ENCODE measurements at regions of chr2 and their contacts with region 1.

Region 1: GRCh38 chr2:205311201-205311600 is 371.1 kb upstream of the NRP2 start:
- DNase-seq: no peak
- ATAC-seq: no peak
- H3K4me3 Mint-ChIP-seq: no peak overlapping the region
- H3K27ac Mint-ChIP-seq: no peak overlapping the region
- H3K4me1 Mint-ChIP-seq: peaks cover 3% of the 10 kb centered on the region
- H3K27me3 Mint-ChIP-seq: no peaks in the 10 kb centered on the region

Region 2: DNA sequence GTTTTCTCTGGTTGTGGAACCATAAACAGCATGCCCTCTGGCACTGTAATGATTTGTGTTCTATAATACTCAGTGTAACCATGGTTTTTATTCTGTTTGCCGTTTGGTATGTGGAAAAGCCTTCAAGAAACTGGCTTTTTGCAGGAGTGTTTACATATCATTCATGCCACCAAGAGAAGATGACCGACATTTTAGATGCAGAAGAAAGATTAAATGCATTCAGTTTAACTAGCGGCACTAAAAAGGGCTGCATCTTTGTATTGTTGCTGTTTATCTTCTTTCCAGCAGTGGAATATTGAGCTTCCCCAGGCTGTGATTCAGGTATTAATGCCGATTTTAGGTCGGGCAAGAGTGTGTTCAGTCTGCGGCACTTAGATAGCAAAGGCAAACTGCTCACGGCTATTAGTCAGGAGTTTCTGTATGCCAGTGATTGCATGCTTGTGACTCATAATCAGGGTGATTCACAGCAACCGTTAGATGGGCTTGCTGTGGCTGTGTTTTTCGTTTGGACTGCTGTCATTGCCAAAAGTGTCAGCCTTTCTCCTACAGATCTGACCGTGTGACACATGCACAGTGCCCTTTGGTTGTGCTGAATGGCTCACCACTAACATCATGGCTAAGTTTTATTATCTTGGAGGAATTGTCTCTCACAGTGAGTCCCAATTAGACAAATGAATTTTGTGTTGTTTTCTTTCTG is 286.2 kb before region 1 on chr2:
- CTCF ChIA-PET with region 1: no interaction called
- POLR2A ChIA-PET with region 1: no interaction called
- intact Hi-C with region 1: loop called in 1 of 2 experiments (anchors 10 kb)
- DNase-seq: peak; percentile 66
- ATAC-seq: peak; percentile 98
- H3K4me3 Mint-ChIP-seq: no peak overlapping the region
- H3K27ac Mint-ChIP-seq: peak overlapping the region; percentile 52
- H3K4me1 Mint-ChIP-seq: peaks cover 19% of the 10 kb centered on the region
- H3K27me3 Mint-ChIP-seq: no peaks in the 10 kb centered on the region

Region 3: GRCh38 chr2:205086662-205087061 is 224.5 kb before region 1 on chr2:
- CTCF ChIA-PET with region 1: no interaction called
- POLR2A ChIA-PET with region 1: no interaction called
- intact Hi-C with region 1: no loop called
- DNase-seq: no peak
- ATAC-seq: no peak
- H3K4me3 Mint-ChIP-seq: no peak overlapping the region
- H3K27ac Mint-ChIP-seq: no peak overlapping the region
- H3K4me1 Mint-ChIP-seq: peaks cover 8% of the 10 kb centered on the region
- H3K27me3 Mint-ChIP-seq: no peaks in the 10 kb centered on the region

Region 4: DNA sequence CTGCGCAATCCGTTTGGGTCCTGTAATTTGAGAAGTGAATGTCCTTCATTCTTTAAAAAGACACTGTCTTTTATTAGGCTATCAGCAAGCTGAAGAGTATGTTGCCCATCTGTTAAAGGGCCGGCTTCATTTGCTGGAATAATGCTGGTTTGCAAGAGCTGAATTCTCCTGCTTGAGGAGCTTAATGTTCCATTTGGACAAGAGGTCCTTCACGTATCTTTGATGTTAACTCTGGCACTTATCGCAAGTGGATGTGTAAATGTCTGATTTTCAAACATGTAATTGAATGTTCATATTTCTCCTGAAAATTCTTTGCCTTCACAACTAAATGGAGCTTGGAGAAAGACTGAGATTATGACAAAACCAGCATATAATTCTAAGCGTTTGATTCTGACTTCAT is 90.3 kb after region 1 on chr2:
- CTCF ChIA-PET with region 1: no interaction called
- POLR2A ChIA-PET with region 1: no interaction called
- intact Hi-C with region 1: no loop called
- DNase-seq: no peak
- ATAC-seq: no peak
- H3K4me3 Mint-ChIP-seq: no peak overlapping the region
- H3K27ac Mint-ChIP-seq: no peak overlapping the region
- H3K4me1 Mint-ChIP-seq: no peaks in the 10 kb centered on the region
- H3K27me3 Mint-ChIP-seq: no peaks in the 10 kb centered on the region